Endothelial cell of umbilical vein (primary cell): ENCODE measurements at regions of chr5 and their contacts with region 1.

Region 1: GRCh38 chr5:6820851-6821479 is 107.7 kb downstream of the TENT4A start:
- DNase-seq: no peak
- H3K4me3 ChIP-seq: no peak overlapping the region
- H3K27ac ChIP-seq: no peak overlapping the region
- H3K4me1 ChIP-seq: no peaks in the 10 kb centered on the region
- H3K27me3 ChIP-seq: no peaks in the 10 kb centered on the region
- CTCF ChIP-seq: peak; percentile 43 to 54
- POLR2A ChIP-seq: no peak

Region 2: GRCh38 chr5:6246820-6247437 is 574.0 kb before region 1 on chr5:
- CTCF ChIA-PET with region 1: no interaction called
- POLR2A ChIA-PET with region 1: no interaction called
- dilution Hi-C with region 1: no loop called
- intact Hi-C with region 1: no loop called
- DNase-seq: no peak
- H3K4me3 ChIP-seq: no peak overlapping the region
- H3K27ac ChIP-seq: no peak overlapping the region
- H3K4me1 ChIP-seq: no peaks in the 10 kb centered on the region
- H3K27me3 ChIP-seq: no peaks in the 10 kb centered on the region
- CTCF ChIP-seq: no peak
- POLR2A ChIP-seq: no peak

Region 3: DNA sequence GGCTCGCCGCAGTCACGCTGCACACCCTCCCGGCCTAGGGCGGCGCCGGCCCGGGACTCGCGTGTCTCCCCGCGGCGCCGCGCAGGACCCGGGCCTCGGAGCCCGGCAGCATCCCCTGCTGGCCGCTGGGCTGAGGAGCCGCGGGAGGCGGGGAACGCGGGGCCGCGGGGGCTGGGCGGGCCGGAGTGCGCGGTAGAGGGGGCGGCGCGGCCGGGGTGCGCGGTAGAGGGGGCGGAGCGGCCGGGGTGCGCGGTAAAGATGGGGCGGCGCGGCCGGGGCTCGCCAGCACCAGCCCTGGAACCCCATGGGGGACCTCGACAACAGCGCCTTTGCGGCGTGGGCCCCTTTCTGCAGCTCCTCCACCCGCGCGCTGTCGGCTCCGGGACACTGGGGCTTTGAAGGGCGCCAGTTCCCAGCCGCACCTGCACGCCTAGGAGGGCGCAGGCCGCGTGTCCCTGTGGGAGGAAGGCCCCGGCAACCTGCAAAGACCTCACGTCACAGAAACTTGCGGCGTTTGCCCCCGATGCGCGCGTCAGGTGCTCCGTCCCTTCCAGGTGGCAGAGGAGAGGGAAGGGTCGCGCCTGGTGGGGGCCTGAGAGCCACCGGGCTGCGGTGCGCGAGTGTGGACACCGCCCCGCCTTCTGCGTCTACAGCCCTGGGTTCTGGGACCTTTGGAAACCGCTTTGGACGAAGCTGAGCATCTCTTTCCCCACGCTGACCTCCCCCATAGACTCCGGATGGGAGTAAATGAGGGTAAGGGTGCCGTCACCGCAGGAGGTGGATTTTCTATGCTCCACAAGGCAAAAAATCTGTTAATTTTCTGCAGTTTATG is 237.7 kb before region 1 on chr5:
- CTCF ChIA-PET with region 1: no interaction called
- POLR2A ChIA-PET with region 1: no interaction called
- dilution Hi-C with region 1: no loop called
- intact Hi-C with region 1: no loop called
- DNase-seq: no peak
- H3K4me3 ChIP-seq: peak overlapping the region in 1 of 3 experiments; percentile 11
- H3K27ac ChIP-seq: no peak overlapping the region
- H3K4me1 ChIP-seq: peaks cover 13% of the 10 kb centered on the region
- H3K27me3 ChIP-seq: peaks cover 25 to 30% of the 10 kb centered on the region in 2 experiments
- CTCF ChIP-seq: peak; percentile 35 to 41
- POLR2A ChIP-seq: no peak

Region 4: DNA sequence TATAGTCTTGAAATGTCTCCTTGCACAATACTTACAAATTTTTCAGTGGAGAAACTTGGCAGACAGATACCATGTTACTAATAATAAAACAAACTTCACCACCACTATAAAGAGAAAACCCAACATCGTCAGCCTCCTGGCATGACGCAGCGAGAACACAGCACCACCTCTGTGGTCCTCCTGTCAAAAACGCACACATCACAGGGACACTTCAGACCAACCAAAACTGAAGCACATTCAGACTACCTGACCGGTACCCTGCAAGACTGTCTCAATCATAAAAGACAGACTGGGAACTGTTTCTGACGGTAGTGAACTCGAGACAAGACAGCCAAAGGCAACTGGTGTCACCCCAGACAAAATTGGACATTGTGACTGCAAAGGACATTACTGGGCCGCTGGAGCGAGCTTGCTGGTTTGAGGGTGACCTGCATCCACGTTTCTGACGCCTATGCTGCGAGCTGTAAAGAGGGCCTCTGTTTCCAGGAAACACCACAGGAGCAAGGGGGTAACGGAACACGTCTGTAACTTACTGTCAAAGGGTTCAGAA is 222.5 kb before region 1 on chr5:
- CTCF ChIA-PET with region 1: no interaction called
- POLR2A ChIA-PET with region 1: no interaction called
- dilution Hi-C with region 1: no loop called
- intact Hi-C with region 1: no loop called
- DNase-seq: no peak
- H3K4me3 ChIP-seq: no peak overlapping the region
- H3K27ac ChIP-seq: no peak overlapping the region
- H3K4me1 ChIP-seq: no peaks in the 10 kb centered on the region
- H3K27me3 ChIP-seq: no peaks in the 10 kb centered on the region
- CTCF ChIP-seq: no peak
- POLR2A ChIP-seq: no peak

Region 5: GRCh38 chr5:6837519-6838110 is 16.6 kb after region 1 on chr5:
- CTCF ChIA-PET with region 1: no interaction called
- POLR2A ChIA-PET with region 1: no interaction called
- dilution Hi-C with region 1: no loop called
- intact Hi-C with region 1: loop called (anchors 2 kb)
- DNase-seq: peak; percentile 25
- H3K4me3 ChIP-seq: no peak overlapping the region
- H3K27ac ChIP-seq: no peak overlapping the region
- H3K4me1 ChIP-seq: no peaks in the 10 kb centered on the region
- H3K27me3 ChIP-seq: no peaks in the 10 kb centered on the region
- CTCF ChIP-seq: peak; percentile 66 to 83
- POLR2A ChIP-seq: no peak

Region 6: DNA sequence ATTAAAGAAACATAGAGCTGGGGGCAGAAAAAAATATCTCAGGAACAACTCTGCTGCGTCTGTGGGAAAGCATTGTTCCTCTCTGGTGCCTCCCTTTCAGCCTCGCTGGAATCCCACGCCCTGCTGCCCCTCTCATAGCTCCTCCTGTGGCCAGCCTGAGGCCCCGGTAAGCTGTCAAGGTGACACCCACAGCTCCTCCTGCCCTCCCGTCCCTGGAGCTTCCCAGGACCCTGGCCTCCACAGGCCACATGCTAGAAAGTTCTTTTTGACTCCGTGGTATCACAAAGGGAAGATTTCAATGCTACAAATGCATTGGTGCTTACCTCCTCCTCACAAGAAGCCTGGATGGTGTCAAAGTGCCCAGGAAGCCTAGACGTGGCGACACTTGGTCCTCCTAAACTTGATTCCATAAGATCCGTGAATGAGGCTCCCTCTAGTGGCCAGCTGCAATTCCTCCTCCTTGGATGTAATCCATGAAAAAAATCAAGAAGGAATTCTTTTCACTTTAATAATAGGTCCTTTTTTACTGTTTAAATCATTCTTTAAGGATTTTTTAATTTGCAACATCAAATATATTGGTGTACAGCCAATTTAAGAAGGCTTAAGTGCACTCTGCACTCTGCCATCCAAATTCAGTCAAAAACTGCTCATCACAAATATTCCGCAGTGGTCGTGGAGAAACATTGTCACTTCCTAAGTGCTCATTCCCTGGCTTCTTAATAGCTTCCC is 925.1 kb after region 1 on chr5:
- CTCF ChIA-PET with region 1: interaction called, 4 read pairs
- POLR2A ChIA-PET with region 1: no interaction called
- dilution Hi-C with region 1: no loop called
- intact Hi-C with region 1: loop called (anchors 1 kb)
- DNase-seq: peak; percentile 52
- H3K4me3 ChIP-seq: no peak overlapping the region
- H3K27ac ChIP-seq: no peak overlapping the region
- H3K4me1 ChIP-seq: no peaks in the 10 kb centered on the region
- H3K27me3 ChIP-seq: no peaks in the 10 kb centered on the region
- CTCF ChIP-seq: peak; percentile 71 to 78
- POLR2A ChIP-seq: no peak

Region 7: GRCh38 chr5:7815892-7816534 is 995.0 kb after region 1 on chr5:
- CTCF ChIA-PET with region 1: no interaction called
- POLR2A ChIA-PET with region 1: no interaction called
- dilution Hi-C with region 1: no loop called
- intact Hi-C with region 1: loop called (anchors 5 kb)
- DNase-seq: peak; percentile 30
- H3K4me3 ChIP-seq: no peak overlapping the region
- H3K27ac ChIP-seq: no peak overlapping the region
- H3K4me1 ChIP-seq: no peaks in the 10 kb centered on the region
- H3K27me3 ChIP-seq: no peaks in the 10 kb centered on the region
- CTCF ChIP-seq: peak; percentile 84 to 88
- POLR2A ChIP-seq: no peak